Activated CD4-positive, alpha-beta T cell treated with anti-CD3 and anti-CD28 coated beads for 36 hours (primary cell): ENCODE measurements at regions of chr19 and their contacts with region 1.

Region 1: DNA sequence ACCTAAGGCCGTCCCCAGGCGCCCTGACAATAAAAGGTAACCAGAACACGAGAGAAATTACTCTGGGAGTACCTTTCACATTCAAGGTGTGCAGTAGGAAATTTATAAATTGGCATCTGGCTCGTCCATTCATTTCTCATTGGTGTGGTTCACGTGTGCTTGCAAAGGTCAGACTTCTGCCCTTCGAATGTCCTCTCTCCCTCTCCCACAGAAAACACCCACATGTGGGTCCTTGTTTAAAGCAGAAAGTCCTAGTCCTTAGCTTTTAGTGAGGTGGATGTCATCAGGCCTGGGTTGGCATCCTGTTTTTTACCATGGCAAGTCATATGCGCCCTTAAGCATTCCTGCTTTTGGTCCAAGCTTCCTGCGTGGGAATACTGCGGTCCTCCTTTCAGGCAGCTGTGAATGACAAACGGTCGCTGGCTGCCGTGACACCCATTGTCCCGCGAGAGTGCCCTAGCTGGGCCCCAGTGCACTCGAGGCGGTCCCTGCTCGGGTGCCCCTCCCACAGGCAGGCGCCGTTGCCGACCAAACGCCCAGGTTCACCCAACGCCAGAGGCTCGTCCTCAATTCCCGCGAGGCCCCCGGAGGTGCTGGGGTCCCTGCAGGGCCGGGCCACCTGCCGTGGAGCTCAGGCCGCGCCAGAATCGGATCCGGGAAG is at the start of gene NUDT19:
- DNase-seq: peak; percentile 91
- ATAC-seq: peak; percentile 83
- H3K4me3 Mint-ChIP-seq: peak within 1 kb of the TSS; percentile 83
- H3K27ac Mint-ChIP-seq: peak within 1 kb of the TSS; percentile 92
- H3K4me1 Mint-ChIP-seq: peaks cover 56% of the 10 kb centered on the region
- H3K27me3 Mint-ChIP-seq: no peaks in the 10 kb centered on the region
- total RNA-seq, gene NUDT19: 14.7 to 17.7 TPM

Region 2: GRCh38 chr19:32448026-32448425 is 243.4 kb before region 1 on chr19:
- CTCF ChIA-PET with region 1: no interaction called
- POLR2A ChIA-PET with region 1: no interaction called
- intact Hi-C with region 1: no loop called
- DNase-seq: no peak
- ATAC-seq: no peak
- H3K4me3 Mint-ChIP-seq: no peak overlapping the region
- H3K27ac Mint-ChIP-seq: no peak overlapping the region
- H3K4me1 Mint-ChIP-seq: peaks cover 4% of the 10 kb centered on the region
- H3K27me3 Mint-ChIP-seq: no peaks in the 10 kb centered on the region

Region 3: DNA sequence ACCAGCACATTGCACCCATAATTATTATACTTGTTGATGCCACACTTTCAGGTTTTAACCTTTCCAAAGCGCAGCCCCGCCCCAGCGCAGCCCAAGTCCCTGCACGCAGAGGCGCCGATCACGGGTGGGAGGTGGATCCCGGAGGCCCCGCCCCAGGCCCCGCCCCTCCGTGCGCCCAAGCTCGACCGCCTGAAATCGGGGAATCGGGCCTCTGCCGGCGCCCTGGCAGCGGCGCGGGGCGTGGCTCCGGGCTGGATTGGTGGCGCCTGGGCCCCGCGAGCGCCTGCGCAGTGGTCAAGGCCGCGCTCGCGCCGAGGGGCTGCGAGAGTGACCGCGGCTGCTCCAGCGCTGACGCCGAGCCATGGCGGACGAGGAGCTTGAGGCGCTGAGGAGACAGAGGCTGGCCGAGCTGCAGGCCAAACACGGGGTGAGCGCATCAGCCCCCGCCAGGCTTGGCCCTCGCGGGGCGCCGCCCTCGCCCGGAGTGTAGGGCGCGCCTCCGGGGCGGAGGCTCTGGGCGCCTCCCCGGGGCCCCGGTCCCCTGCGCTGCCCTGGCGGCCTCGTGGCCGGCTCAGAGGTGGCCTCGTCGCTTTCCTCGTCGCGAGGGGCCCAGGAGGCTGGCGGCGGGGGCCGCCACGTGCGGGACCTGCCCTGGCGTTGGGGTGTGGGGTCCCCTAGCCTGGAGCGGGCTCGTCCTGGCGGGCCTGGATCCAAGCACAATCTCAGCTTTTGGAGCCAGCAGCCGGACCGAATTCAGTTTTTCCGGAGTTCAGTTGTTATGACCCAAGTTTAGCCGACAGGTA is 110.3 kb before region 1 on chr19 and contains the start of gene PDCD5:
- CTCF ChIA-PET with region 1: no interaction called
- POLR2A ChIA-PET with region 1: no interaction called
- intact Hi-C with region 1: loop called (anchors 1 to 5 kb)
- DNase-seq: peak; percentile 99
- ATAC-seq: peak; percentile 90
- H3K4me3 Mint-ChIP-seq: peak within 1 kb of the TSS; percentile 92
- H3K27ac Mint-ChIP-seq: peak within 1 kb of the TSS; percentile 91
- H3K4me1 Mint-ChIP-seq: peaks cover 33% of the 10 kb centered on the region
- H3K27me3 Mint-ChIP-seq: peaks cover under 1% of the 10 kb centered on the region
- total RNA-seq, gene PDCD5: 268 to 272 TPM

Region 4: GRCh38 chr19:32611161-32611560 is 80.3 kb before region 1 on chr19:
- CTCF ChIA-PET with region 1: no interaction called
- POLR2A ChIA-PET with region 1: no interaction called
- intact Hi-C with region 1: no loop called
- DNase-seq: no peak
- ATAC-seq: no peak
- H3K4me3 Mint-ChIP-seq: no peak overlapping the region
- H3K27ac Mint-ChIP-seq: no peak overlapping the region
- H3K4me1 Mint-ChIP-seq: no peaks in the 10 kb centered on the region
- H3K27me3 Mint-ChIP-seq: no peaks in the 10 kb centered on the region

Region 5: GRCh38 chr19:32674959-32675719 is 16.3 kb before region 1 on chr19 and contains the start of gene ANKRD27:
- CTCF ChIA-PET with region 1: interaction called, 6 read pairs
- POLR2A ChIA-PET with region 1: interaction called, 8 read pairs
- intact Hi-C with region 1: loop called (anchors 1 kb)
- DNase-seq: peak; percentile 99
- ATAC-seq: peak; percentile 95
- H3K4me3 Mint-ChIP-seq: peak within 1 kb of the TSS; percentile 78
- H3K27ac Mint-ChIP-seq: peak within 1 kb of the TSS; percentile 69
- H3K4me1 Mint-ChIP-seq: peaks cover 30% of the 10 kb centered on the region
- H3K27me3 Mint-ChIP-seq: peaks cover 11% of the 10 kb centered on the region
- total RNA-seq, gene ANKRD27: 36.6 to 37.0 TPM

Region 6: DNA sequence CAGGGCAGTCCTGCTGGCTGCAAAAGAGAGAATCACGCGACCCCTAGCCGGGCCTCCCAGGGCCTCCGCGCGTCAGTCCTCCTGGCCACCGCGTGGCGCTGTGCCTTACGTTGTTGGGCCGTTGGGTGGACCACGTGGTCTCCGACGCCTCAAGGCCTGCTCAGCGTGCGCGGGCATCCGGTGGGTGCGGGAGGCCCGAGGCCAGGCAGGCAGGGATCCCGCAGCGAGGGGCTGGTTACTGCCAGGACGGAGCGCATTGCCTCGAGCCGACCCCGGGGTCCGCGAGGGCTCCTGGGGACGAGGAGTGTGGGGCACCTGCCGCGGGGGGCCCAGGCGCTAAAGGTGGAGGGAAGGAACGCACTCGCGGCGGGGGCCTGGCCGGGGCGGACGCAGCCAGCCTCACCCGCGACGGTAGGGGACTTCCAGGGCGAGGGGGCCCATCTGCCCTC is 28.2 kb after region 1 on chr19 and contains the start of gene TDRD12:
- CTCF ChIA-PET with region 1: no interaction called
- POLR2A ChIA-PET with region 1: no interaction called
- intact Hi-C with region 1: no loop called
- DNase-seq: peak; percentile 16
- ATAC-seq: no peak
- H3K4me3 Mint-ChIP-seq: no peak within 1 kb of the TSS
- H3K27ac Mint-ChIP-seq: no peak within 1 kb of the TSS
- H3K4me1 Mint-ChIP-seq: no peaks in the 10 kb centered on the region
- H3K27me3 Mint-ChIP-seq: no peaks in the 10 kb centered on the region
- total RNA-seq, gene TDRD12: 0.12 to 0.23 TPM

Region 7: GRCh38 chr19:33080761-33081681 is 389.6 kb after region 1 on chr19 and contains the start of gene GPATCH1:
- CTCF ChIA-PET with region 1: no interaction called
- POLR2A ChIA-PET with region 1: no interaction called
- intact Hi-C with region 1: loop called in 1 of 2 experiments (anchors 1 kb)
- DNase-seq: peak; percentile 93
- ATAC-seq: peak; percentile 94
- H3K4me3 Mint-ChIP-seq: peak within 1 kb of the TSS; percentile 99
- H3K27ac Mint-ChIP-seq: peak within 1 kb of the TSS; percentile 97
- H3K4me1 Mint-ChIP-seq: peaks cover 16% of the 10 kb centered on the region
- H3K27me3 Mint-ChIP-seq: no peaks in the 10 kb centered on the region
- total RNA-seq, gene GPATCH1: 9.5 to 11.1 TPM